Endothelial cell of umbilical vein (primary cell): ENCODE measurements at regions of chr9 and their contacts with region 1.

Region 1: DNA sequence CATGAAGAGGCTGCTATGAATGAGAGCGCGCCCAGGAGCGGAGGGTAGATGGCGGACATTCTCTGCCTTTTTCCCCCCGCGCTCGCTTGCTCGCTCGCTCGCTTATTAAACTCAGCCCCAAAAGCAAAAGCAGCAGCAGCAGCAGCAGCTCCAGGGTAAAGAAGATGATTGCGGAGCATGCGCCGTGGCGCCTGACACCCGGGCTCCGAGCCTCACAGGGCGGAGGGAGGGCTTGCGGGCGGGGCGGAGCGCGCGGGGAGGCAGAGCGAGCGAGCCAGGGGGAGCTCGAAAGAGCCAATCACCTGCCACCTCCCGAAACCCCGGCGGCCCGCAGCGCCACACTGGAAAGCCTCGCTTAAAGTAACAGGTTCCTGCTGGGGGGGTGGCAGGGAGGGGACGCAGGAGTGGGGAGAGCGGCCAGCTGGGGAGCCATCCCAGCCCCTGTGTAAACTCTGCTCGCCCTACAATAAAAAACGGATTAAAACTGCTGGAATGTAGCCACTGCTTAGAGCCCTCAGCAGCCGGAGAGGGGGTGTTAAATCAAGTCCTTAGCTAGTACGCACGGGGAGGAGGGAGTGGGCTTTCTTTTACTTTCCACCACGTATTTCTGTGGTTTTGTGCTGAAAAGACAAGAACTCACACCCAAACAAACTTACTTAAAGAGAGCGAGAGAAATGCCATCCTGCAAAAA is at the start of gene MLLT3:
- DNase-seq: peak; percentile 96
- H3K4me3 ChIP-seq: peak within 1 kb of the TSS; percentile 43 to 81 (median 66)
- H3K27ac ChIP-seq: peak within 1 kb of the TSS; percentile 33
- H3K4me1 ChIP-seq: peaks cover 30% of the 10 kb centered on the region
- H3K27me3 ChIP-seq: no peaks in the 10 kb centered on the region
- CTCF ChIP-seq: peak in 1 of 2 donors; percentile 9
- POLR2A ChIP-seq: no peak
- total RNA-seq, gene MLLT3: 10.0 and 11.1 TPM in 2 replicates

Region 2: GRCh38 chr9:20356403-20357035 is 266.0 kb before region 1 on chr9:
- CTCF ChIA-PET with region 1: interaction called, 17 read pairs
- POLR2A ChIA-PET with region 1: no interaction called
- dilution Hi-C with region 1: no loop called
- intact Hi-C with region 1: loop called (anchors 1 kb)
- DNase-seq: peak; percentile 96
- H3K4me3 ChIP-seq: peak overlapping the region in 2 of 3 experiments; percentile 13 to 53
- H3K27ac ChIP-seq: peak overlapping the region; percentile 32
- H3K4me1 ChIP-seq: peaks cover 19% of the 10 kb centered on the region
- H3K27me3 ChIP-seq: no peaks in the 10 kb centered on the region
- CTCF ChIP-seq: peak; percentile 66 to 82
- POLR2A ChIP-seq: no peak

Region 3: GRCh38 chr9:20462410-20462809 is 160.1 kb before region 1 on chr9:
- CTCF ChIA-PET with region 1: no interaction called
- POLR2A ChIA-PET with region 1: no interaction called
- dilution Hi-C with region 1: no loop called
- intact Hi-C with region 1: loop called (anchors 5 kb)
- DNase-seq: no peak
- H3K4me3 ChIP-seq: no peak overlapping the region
- H3K27ac ChIP-seq: no peak overlapping the region
- H3K4me1 ChIP-seq: no peaks in the 10 kb centered on the region
- H3K27me3 ChIP-seq: no peaks in the 10 kb centered on the region
- CTCF ChIP-seq: no peak
- POLR2A ChIP-seq: no peak

Region 4: DNA sequence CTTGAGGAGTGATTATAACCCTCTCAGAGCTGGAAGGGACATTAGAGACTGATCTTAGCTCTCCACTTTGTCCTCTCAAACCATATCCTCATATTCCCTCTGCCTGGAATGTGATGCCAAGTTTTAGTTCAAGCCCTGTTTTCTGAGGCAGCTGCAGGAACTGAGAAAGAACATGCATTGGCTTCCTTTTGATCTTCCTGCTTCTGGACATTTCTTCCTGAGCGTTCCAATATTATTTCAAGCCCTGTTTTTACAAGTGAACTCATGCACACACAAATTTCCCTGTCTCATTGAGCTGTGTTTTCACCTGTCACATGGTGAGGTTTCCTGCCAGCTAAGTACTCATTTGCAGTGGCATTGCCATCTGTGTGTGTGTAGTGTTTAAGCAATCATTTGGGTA is 78.6 kb after region 1 on chr9:
- CTCF ChIA-PET with region 1: interaction called, 24 read pairs
- POLR2A ChIA-PET with region 1: interaction called, 4 read pairs
- dilution Hi-C with region 1: no loop called
- intact Hi-C with region 1: loop called (anchors 1 kb)
- DNase-seq: peak; percentile 94
- H3K4me3 ChIP-seq: peak overlapping the region in 1 of 3 experiments; percentile 26
- H3K27ac ChIP-seq: peak overlapping the region; percentile 76
- H3K4me1 ChIP-seq: peaks cover 26% of the 10 kb centered on the region
- H3K27me3 ChIP-seq: no peaks in the 10 kb centered on the region
- CTCF ChIP-seq: no peak
- POLR2A ChIP-seq: no peak

Region 5: DNA sequence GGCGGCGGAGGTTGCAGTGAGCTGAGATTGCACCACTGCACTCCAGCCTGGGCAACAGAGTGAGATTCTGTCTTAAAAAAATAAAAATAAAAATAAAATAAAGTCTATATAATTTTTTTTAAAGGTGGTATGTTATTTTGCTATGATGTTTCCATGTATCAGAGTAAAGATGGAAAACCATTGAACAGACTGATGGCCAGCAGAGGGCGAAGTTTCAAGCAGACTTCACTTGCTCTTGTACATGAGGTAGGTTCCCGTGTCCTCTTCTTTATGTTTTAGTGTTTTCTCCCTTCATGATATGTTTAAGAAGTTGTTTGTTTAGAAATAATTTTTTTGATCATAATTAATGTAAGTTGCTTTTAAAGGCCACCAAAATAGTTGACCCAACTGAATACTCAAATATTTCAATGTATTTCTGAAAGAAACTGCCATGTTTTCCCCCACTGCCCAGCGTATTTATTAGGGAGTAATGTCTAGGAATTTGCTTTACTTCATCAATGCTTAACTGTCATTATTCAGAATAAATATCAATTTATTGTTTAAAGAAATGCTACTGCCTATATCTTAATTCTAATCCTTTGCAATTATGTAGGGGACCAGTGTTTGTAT is 262.6 kb after region 1 on chr9:
- CTCF ChIA-PET with region 1: interaction called, 80 read pairs
- POLR2A ChIA-PET with region 1: interaction called, 5 read pairs
- dilution Hi-C with region 1: no loop called
- intact Hi-C with region 1: loop called (anchors 1 kb)
- DNase-seq: peak; percentile 51
- H3K4me3 ChIP-seq: no peak overlapping the region
- H3K27ac ChIP-seq: no peak overlapping the region
- H3K4me1 ChIP-seq: no peaks in the 10 kb centered on the region
- H3K27me3 ChIP-seq: no peaks in the 10 kb centered on the region
- CTCF ChIP-seq: peak; percentile 44 to 59
- POLR2A ChIP-seq: no peak

Region 6: DNA sequence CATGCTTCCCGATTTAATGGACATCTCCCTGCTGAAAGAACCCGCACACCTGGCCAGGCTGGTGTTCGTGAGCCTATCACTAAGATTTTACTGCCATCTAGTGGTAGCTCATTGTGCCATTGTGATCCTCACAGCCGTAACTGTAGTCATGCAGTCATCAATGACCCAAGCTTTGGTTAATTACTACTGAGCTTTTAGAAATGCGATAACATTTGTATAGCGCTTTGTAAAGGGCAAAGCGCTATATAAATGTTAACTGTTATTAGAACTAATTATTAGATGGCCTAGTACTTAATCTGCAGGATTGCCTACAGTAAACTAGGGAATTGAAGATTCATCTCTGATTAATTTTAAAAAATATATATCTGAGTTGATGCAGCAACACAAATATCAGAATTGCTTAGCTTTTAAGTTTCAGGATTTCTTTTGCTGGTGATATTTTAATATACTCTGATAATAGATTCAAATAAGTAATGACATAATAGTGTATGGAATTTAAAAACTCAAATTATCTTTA is 318.8 kb after region 1 on chr9:
- CTCF ChIA-PET with region 1: interaction called, 153 read pairs
- POLR2A ChIA-PET with region 1: no interaction called
- dilution Hi-C with region 1: no loop called
- intact Hi-C with region 1: loop called (anchors 1 kb)
- DNase-seq: peak; percentile 74
- H3K4me3 ChIP-seq: no peak overlapping the region
- H3K27ac ChIP-seq: no peak overlapping the region
- H3K4me1 ChIP-seq: no peaks in the 10 kb centered on the region
- H3K27me3 ChIP-seq: no peaks in the 10 kb centered on the region
- CTCF ChIP-seq: peak; percentile 63 to 72
- POLR2A ChIP-seq: no peak